Posterior cingulate gyrus (tissue), 11 donors: ENCODE measurements at regions of chr5 and their contacts with region 1.

Region 1: GRCh38 chr5:112419986-112420864 is 1.1 kb upstream of the EPB41L4A start:
- DNase-seq: peak; percentile 32 to 96 (median 78)

Region 2: DNA sequence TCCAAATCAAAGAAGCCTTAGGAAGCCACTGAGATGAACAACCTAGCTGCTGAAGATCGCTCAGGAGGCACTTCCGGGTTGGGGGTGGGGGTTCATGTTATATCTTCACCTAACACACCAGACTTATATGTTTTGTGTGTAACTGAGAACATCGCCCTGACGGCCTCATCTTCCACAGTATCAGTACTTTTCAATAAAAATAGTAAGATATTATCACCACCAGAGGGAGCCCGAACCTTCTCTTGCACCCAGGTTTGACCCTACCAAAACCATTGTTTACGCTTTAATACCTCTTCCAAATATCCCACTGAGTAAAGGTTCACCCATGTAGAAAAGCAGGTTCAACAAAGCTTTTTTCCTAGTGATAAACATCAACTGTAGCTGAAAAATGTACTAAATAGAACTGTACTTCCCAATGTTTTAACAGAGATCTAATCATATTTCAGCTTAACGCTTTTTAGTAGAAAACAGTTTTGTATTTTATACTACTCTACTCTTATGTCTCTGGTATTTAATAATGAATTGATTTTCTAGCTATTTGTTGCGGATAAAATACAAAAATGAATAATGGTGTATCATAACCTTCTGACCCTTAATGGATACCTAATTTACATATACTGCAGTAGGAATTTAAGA is 245.1 kb before region 1 on chr5:
- intact Hi-C with region 1: loop called (anchors 2 kb)
- DNase-seq: peak in 1 of 10 donors; percentile 31

Region 3: GRCh38 chr5:112210430-112211005 is 209.7 kb before region 1 on chr5:
- intact Hi-C with region 1: loop called (anchors 1 kb)
- DNase-seq: peak in 5 of 10 donors; percentile 30 to 70 (median 47)